ENCODE measurements at regions of chr5 and their contacts with region 1.

Region 1: GRCh38 chr5:181207214-181208107 is 2.5 kb upstream of the TRIM7 start:
- DNase-seq: peak; percentile 62 to 88 (median 79)
- ATAC-seq: peak; percentile 36 to 70 (median 50)
- H3K4me3 ChIP-seq: peak overlapping the region; percentile 35 to 77 (median 68)
- H3K27ac ChIP-seq: peak overlapping the region; percentile 30 to 90 (median 82)
- H3K4me1 ChIP-seq: peaks cover 4 to 46% (median 23%) of the 10 kb centered on the region in 12 donors
- H3K27me3 ChIP-seq: peaks cover 0 to 3% (median 0%) of the 10 kb centered on the region in 9 donors
- CTCF ChIP-seq: no peak
- POLR2A ChIP-seq: no peak

Region 2: GRCh38 chr5:181069767-181070491 is 137.5 kb before region 1 on chr5:
- intact Hi-C with region 1: no loop called
- DNase-seq: peak in 1 of 5 donors; percentile 36
- ATAC-seq: peak in 2 of 4 donors; percentile 33 to 62
- H3K4me3 ChIP-seq: peak overlapping the region in 2 of 12 donors; percentile 2 to 15
- H3K27ac ChIP-seq: no peak overlapping the region
- H3K4me1 ChIP-seq: no peaks in the 10 kb centered on the region
- H3K27me3 ChIP-seq: peaks cover 0 to 45% (median 22%) of the 10 kb centered on the region in 9 donors
- CTCF ChIP-seq: no peak
- POLR2A ChIP-seq: no peak

Region 3: GRCh38 chr5:181217803-181218062 is 10.3 kb after region 1 on chr5:
- intact Hi-C with region 1: loop called in 5 of 10 experiments (anchors 1 to 2 kb)
- DNase-seq: no peak
- ATAC-seq: peak in 2 of 4 donors; percentile 0 to 1
- H3K4me3 ChIP-seq: peak overlapping the region in 11 of 12 donors; percentile 31 to 64 (median 53)
- H3K27ac ChIP-seq: peak overlapping the region in 11 of 12 donors; percentile 4 to 79 (median 70)
- H3K4me1 ChIP-seq: peaks cover 0 to 47% (median 15%) of the 10 kb centered on the region in 12 donors
- H3K27me3 ChIP-seq: no peaks in the 10 kb centered on the region
- CTCF ChIP-seq: no peak
- POLR2A ChIP-seq: no peak

Region 4: DNA sequence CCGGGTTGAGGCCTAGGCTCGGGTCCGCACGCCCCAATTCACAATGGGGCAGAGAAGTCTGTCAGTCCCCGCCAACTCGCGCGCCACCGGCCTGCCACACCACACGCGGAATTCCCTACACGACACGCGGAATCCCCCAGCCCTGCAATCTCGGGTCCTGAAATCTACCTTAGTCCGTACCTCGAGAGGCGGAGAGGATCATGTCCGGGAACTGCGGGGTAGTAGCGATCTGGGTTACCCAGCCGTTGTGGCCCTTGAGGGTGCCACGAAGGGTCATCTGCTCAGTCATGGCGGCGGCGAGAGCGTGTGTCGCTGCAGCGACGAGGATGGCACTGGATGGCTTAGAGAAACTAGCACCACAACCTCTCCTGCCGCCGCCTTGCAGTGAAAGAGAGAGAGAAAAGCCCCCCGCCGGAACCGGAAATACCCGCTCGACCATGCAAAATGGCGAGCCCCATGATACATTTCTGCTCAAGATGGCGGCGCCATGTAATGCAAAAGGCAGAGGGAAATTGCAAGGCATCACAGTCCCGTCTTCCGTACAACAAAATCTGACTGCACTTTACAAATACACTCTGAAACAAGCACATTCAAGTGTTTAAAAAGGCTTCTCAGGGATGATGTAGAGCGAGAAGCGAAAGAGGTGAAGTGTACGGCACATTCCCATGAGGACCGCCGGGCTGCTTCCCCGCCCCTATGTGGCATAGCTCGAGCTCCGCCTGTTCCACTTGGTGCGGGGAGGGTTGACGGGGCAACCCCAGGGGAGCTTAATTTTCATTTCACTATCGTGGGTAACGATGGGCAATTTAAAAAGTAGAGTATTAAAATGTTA is 36.3 kb after region 1 on chr5 and contains the start of gene RACK1:
- intact Hi-C with region 1: loop called in 1 of 10 experiments (anchors 5 kb)
- DNase-seq: peak; percentile 90 to 93 (median 92)
- ATAC-seq: peak; percentile 67 to 75 (median 70)
- H3K4me3 ChIP-seq: peak within 1 kb of the TSS; percentile 68 to 90 (median 80)
- H3K27ac ChIP-seq: peak within 1 kb of the TSS; percentile 83 to 99 (median 95)
- H3K4me1 ChIP-seq: peaks cover 3 to 74% (median 47%) of the 10 kb centered on the region in 12 donors
- H3K27me3 ChIP-seq: no peaks in the 10 kb centered on the region
- CTCF ChIP-seq: no peak
- POLR2A ChIP-seq: peak in 1 of 2 donors; percentile 63
- total RNA-seq, gene RACK1: 560 to 1,237 (median 771) TPM

Measured in heart left ventricle (tissue), 16 donors.